ENCODE measurements at regions of chr1 and their contacts with region 1.

Region 1: DNA sequence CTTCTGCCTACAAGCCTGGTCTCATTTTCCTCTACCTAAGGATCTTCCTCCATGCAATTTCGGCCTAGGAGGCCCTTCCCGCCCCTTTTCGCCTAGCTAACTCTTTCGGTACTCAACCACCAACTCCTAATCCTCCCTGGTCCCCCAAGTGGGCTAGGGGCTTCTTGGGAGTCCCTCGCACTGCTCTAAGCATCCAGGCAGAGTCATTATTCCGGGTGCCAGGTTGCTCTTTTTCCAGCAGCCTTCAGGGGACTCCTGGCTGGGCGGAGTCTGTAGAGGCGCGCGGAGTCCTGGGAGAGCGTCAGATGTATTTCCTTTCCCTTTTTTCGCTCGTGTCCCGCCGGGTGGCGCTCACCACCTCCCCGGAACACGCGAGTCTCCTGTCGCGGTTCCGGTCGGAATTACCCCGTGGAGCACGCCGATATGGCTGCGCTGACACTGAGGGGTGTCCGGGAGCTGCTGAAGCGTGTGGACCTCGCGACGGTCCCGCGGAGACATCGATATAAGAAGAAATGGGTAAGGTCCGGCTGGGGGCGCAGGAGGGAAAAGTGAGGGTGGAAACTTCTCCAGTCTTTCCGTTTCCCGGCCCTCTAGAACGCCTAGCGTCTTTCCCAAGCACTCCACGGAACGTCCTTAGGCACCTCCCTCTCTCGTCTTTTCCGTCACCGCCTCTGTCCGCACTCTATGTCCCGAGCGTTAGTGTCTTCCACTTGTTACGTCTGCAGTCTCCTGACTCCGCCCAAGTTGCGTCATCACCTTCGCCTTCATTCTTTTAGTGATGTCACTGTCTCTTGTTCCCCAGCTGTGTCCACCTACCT is at the start of gene NSUN4:
- DNase-seq: peak; percentile 98
- ATAC-seq: peak; percentile 96
- H3K4me3 ChIP-seq: peak within 1 kb of the TSS; percentile 72
- H3K27ac ChIP-seq: peak within 1 kb of the TSS; percentile 90
- H3K4me1 ChIP-seq: peaks cover 4% of the 10 kb centered on the region
- H3K27me3 ChIP-seq: no peaks in the 10 kb centered on the region
- CTCF ChIP-seq: peak; percentile 80
- POLR2A ChIP-seq: peak; percentile 91
- RAD21 ChIP-seq: 0 out of 2 replicates have a peak, but pooled peaks have one; percentile 22
- total RNA-seq, gene NSUN4: 10.9 and 11.9 TPM in 2 replicates

Region 2: GRCh38 chr1:45752441-45753052 is 588.1 kb before region 1 on chr1:
- CTCF ChIA-PET with region 1: no interaction called
- POLR2A ChIA-PET with region 1: no interaction called
- dilution Hi-C with region 1: no loop called
- in situ Hi-C with region 1: no loop called
- intact Hi-C with region 1: no loop called
- DNase-seq: peak; percentile 46
- ATAC-seq: no peak
- H3K4me3 ChIP-seq: no peak overlapping the region
- H3K27ac ChIP-seq: peak overlapping the region; percentile 30; the same call in 1 of the 2 replicates
- H3K4me1 ChIP-seq: 0 out of 2 replicates have a peak, but pooled peaks cover 1% of the 10 kb centered on the region
- H3K27me3 ChIP-seq: no peaks in the 10 kb centered on the region; the same call in 1 of the 2 replicates
- CTCF ChIP-seq: no peak
- POLR2A ChIP-seq: no peak
- RAD21 ChIP-seq: no peak

Region 3: GRCh38 chr1:46301808-46302640 is 38.6 kb before region 1 on chr1:
- CTCF ChIA-PET with region 1: no interaction called
- POLR2A ChIA-PET with region 1: no interaction called
- dilution Hi-C with region 1: no loop called
- in situ Hi-C with region 1: no loop called
- intact Hi-C with region 1: loop called (anchors 2 kb)
- DNase-seq: peak; percentile 52
- ATAC-seq: peak; percentile 18
- H3K4me3 ChIP-seq: peak overlapping the region; percentile 97
- H3K27ac ChIP-seq: peak overlapping the region; percentile 100
- H3K4me1 ChIP-seq: peaks cover 5% of the 10 kb centered on the region
- H3K27me3 ChIP-seq: no peaks in the 10 kb centered on the region
- CTCF ChIP-seq: 0 out of 2 replicates have a peak, but pooled peaks have one; percentile 25
- POLR2A ChIP-seq: no peak
- RAD21 ChIP-seq: no peak